H1 (cell line): ENCODE measurements at regions of chr16 and their contacts with region 1.

Region 1: DNA sequence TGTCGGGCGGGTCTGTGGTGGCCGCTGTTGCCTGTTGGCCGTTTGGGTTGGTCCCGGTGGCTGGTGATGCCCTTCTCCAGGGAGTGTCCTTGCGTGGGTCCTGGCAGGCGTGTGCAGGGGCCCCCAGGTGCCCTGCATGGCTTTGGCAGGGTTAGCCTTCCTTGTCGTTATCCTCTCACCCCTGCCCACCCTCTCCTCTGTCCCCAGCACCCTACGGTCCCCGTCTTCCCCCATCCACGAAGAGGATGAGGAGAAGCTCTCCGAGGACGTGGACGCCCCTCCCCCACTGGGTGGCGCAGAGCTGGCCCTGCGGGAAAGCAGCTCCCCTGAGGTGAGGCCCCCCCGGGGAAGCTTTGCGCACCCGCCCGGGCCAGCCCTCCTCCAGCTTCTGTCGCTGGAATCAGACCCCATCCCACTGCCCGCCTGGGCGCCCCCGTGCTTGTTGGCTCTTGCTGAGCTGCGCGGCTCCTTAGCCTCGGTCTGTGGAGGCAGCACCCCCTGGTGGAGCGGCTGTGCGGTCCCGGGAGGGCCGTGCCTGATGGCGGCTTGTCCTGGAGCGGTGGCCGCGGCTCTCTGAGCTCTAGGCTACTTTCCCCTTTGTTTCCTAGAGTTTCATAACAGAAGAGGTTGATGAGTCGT is 10.6 kb upstream of the NUDT16L1 start:
- DNase-seq: peak; percentile 50 to 90
- H3K4me3 ChIP-seq: no peak overlapping the region
- H3K27ac ChIP-seq: no peak overlapping the region
- H3K4me1 ChIP-seq: no peaks in the 10 kb centered on the region
- H3K27me3 ChIP-seq: no peaks in the 10 kb centered on the region
- CTCF ChIP-seq: peak; percentile 78 to 91 (median 81)
- EP300 ChIP-seq: no peak
- POLR2A ChIP-seq: no peak
- RAD21 ChIP-seq: peak; percentile 60 to 78

Region 2: DNA sequence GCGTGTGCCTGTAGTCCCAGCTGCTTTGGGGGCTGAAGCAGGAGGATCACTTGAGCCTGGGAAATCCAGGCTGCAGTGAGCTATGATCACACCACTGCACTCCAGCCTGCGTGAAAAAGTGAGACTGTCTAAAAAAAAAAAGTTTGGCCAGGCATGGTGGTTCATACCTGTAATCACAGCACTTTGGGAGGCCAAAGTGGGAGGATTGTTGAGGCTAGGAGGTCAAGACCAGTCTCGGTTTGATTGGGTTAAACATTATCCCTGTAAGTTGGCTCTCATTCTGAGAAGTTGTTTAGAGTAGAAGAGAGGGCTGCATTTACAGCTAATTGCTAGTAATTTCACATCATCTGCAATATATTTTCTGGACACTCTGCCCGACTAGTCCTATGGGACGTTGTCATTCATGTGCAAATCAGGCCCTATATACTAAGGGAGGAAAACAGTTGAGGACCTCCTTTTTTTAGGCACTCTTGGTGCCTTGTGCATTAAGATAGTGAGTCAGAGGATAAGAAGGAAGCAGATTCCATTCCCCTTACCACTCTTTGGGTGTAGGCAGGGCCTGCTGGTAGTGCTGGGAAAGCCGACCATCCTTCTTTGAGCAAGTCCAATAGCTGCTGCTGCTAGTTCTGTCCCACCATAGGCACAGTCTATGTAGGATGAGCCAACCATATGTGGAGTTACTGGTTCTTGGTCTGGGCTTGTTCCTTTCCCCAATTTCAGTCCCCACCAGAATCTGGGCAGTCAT is 187.8 kb before region 1 on chr16:
- CTCF ChIA-PET with region 1: interaction called, 10 read pairs
- POLR2A ChIA-PET with region 1: no interaction called
- DNase-seq: no peak
- H3K4me3 ChIP-seq: no peak overlapping the region
- H3K27ac ChIP-seq: no peak overlapping the region
- H3K4me1 ChIP-seq: no peaks in the 10 kb centered on the region
- H3K27me3 ChIP-seq: no peaks in the 10 kb centered on the region
- CTCF ChIP-seq: no peak
- EP300 ChIP-seq: no peak
- POLR2A ChIP-seq: no peak
- RAD21 ChIP-seq: no peak

Region 3: DNA sequence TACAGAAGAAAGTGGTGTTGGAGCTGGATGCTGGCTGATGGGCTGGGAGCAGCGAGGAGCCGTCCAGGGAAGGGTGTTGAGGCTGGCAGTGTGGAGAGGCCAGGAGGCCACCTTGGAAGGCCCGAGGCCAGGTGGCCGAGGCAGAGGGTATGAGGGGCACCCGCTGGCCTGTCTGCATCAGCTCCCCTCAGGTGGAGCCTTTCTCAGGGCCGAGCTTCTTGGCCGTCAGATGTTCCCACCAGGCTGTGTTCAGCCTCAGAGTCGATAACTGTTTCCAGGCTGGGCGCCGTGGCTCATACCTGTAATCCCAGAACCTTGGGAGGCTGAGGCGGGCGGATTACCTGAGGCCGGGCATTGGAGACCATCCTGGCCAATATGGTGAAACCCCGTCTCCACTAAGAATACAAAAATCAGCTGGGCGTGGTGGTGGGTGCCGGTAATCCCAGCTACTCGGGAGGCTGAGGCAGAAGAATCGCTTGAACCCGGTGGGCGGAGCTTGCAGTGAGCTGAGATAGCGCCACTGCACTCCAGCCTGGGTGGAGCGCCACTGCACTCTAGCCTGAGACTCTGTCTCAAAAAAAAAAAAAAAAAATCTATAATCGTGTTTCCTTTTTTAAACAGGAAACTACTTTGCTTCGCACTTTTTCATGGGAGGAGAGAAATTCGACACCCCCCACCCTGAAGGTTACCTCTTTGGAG is 32.8 kb before region 1 on chr16:
- CTCF ChIA-PET with region 1: interaction called, 10 read pairs
- POLR2A ChIA-PET with region 1: no interaction called
- DNase-seq: peak in 1 of 2 experiments; percentile 41
- H3K4me3 ChIP-seq: no peak overlapping the region
- H3K27ac ChIP-seq: no peak overlapping the region
- H3K4me1 ChIP-seq: peaks cover 0 to 2% (median 0%) of the 10 kb centered on the region in 4 experiments; a peak in 2 of 7 replicates
- H3K27me3 ChIP-seq: no peaks in the 10 kb centered on the region
- CTCF ChIP-seq: no peak
- EP300 ChIP-seq: no peak
- POLR2A ChIP-seq: no peak
- RAD21 ChIP-seq: no peak

Region 4: GRCh38 chr16:4660454-4661007 is 22.2 kb before region 1 on chr16:
- CTCF ChIA-PET with region 1: interaction called, 10 read pairs
- POLR2A ChIA-PET with region 1: interaction called, 3 read pairs
- DNase-seq: no peak
- H3K4me3 ChIP-seq: no peak overlapping the region
- H3K27ac ChIP-seq: no peak overlapping the region
- H3K4me1 ChIP-seq: peaks cover 0 to 2% (median 0%) of the 10 kb centered on the region in 4 experiments; a peak in 3 of 7 replicates
- H3K27me3 ChIP-seq: no peaks in the 10 kb centered on the region
- CTCF ChIP-seq: no peak
- EP300 ChIP-seq: no peak
- POLR2A ChIP-seq: no peak
- RAD21 ChIP-seq: no peak

Region 5: GRCh38 chr16:4693296-4693955 is 10.7 kb after region 1 on chr16 and contains the start of gene NUDT16L1:
- CTCF ChIA-PET with region 1: interaction called, 17 read pairs
- POLR2A ChIA-PET with region 1: interaction called, 16 read pairs
- DNase-seq: peak; percentile 81 to 96
- H3K4me3 ChIP-seq: peak within 1 kb of the TSS; percentile 72 to 93 (median 76)
- H3K27ac ChIP-seq: peak within 1 kb of the TSS; percentile 50; the same call in 1 of the 2 replicates
- H3K4me1 ChIP-seq: peaks cover 0 to 7% (median 5%) of the 10 kb centered on the region in 4 experiments; a peak in 4 of 7 replicates
- H3K27me3 ChIP-seq: no peaks in the 10 kb centered on the region
- CTCF ChIP-seq: peak in 2 of 3 experiments; percentile 23 to 24; a peak in 2 of 4 replicates
- EP300 ChIP-seq: no peak
- POLR2A ChIP-seq: peak in 1 of 2 experiments; percentile 80; a peak in 2 of 3 replicates
- RAD21 ChIP-seq: no peak; a peak in 1 of 4 replicates
- total RNA-seq, gene NUDT16L1: 34.8 and 41.3 TPM in 2 replicates